ENCODE measurements at regions of chr9 and their contacts with region 1.

Region 1: DNA sequence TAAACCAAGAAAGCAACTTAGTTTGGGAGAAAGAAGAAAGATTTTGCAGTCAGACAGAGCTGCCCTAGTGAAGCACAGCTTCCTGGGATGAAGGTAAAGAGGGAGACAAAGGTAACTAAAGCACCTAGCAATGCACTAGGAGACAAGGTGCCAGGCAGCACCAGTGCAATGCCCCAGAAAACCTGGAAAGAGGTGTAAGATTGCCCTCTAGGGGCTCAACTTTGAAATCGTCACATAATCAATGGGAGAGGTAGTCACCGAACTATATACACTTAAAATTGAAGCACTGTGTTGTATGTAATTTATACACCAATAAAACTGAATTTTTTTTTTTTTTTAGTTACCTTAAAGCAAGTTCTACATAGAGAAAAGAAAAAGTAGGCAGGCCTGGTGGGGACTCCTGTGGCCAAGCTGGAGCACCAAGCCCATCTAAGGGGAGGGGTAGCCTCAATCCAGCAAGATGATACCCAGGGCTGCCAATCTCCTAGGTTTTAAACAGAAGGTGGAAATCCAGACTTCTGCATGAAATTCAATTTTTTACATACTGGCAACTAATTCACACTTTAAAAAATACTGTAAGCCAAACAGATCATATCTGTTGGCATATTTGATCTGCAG is 48.2 kb downstream of the CDK5RAP2 start:
- DNase-seq: peak; percentile 30
- H3K4me3 ChIP-seq: no peak overlapping the region
- H3K27ac ChIP-seq: no peak overlapping the region
- H3K4me1 ChIP-seq: no peaks in the 10 kb centered on the region
- H3K27me3 ChIP-seq: no peaks in the 10 kb centered on the region
- CTCF ChIP-seq: peak; percentile 25 to 40
- POLR2A ChIP-seq: no peak

Region 2: GRCh38 chr9:119961774-119962424 is 569.9 kb before region 1 on chr9:
- CTCF ChIA-PET with region 1: no interaction called
- POLR2A ChIA-PET with region 1: no interaction called
- dilution Hi-C with region 1: no loop called
- intact Hi-C with region 1: loop called (anchors 5 kb)
- DNase-seq: peak; percentile 7
- H3K4me3 ChIP-seq: no peak overlapping the region
- H3K27ac ChIP-seq: no peak overlapping the region
- H3K4me1 ChIP-seq: no peaks in the 10 kb centered on the region
- H3K27me3 ChIP-seq: no peaks in the 10 kb centered on the region
- CTCF ChIP-seq: peak; percentile 63 to 73
- POLR2A ChIP-seq: no peak

Region 3: DNA sequence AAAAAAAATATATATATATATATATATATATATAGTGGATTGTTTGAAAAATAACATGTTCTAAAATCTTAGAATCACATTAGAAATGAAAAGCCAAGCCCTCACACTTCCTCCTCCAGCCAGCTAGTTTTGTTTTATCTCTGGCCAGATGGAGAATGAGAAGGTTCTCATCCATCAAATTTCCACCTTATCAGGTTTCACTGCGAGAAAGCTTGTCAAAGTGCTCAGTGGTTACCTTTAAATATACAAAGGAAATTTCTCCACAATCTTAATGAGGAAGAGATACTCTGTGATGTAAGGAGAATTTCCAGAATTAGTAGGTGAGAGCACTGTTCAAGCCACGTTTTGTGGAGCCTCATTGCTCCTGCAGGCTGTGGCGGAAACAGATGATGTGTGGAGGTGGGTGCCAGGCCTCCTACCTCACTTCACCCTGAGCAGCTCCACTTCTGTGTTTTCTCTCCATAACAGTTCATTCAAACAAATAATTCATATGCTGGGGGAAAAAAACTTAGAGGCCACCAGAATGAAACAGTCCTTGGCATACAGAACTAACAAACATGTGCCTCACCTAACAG is 23.8 kb before region 1 on chr9:
- CTCF ChIA-PET with region 1: no interaction called
- POLR2A ChIA-PET with region 1: no interaction called
- dilution Hi-C with region 1: no loop called
- intact Hi-C with region 1: no loop called
- DNase-seq: no peak
- H3K4me3 ChIP-seq: no peak overlapping the region
- H3K27ac ChIP-seq: no peak overlapping the region
- H3K4me1 ChIP-seq: no peaks in the 10 kb centered on the region
- H3K27me3 ChIP-seq: no peaks in the 10 kb centered on the region
- CTCF ChIP-seq: no peak
- POLR2A ChIP-seq: no peak

Region 4: GRCh38 chr9:120542701-120543490 is 11.1 kb after region 1 on chr9:
- CTCF ChIA-PET with region 1: interaction called, 10 read pairs
- POLR2A ChIA-PET with region 1: no interaction called
- dilution Hi-C with region 1: no loop called
- intact Hi-C with region 1: no loop called
- DNase-seq: peak; percentile 6
- H3K4me3 ChIP-seq: no peak overlapping the region
- H3K27ac ChIP-seq: no peak overlapping the region
- H3K4me1 ChIP-seq: peaks cover 19% of the 10 kb centered on the region
- H3K27me3 ChIP-seq: no peaks in the 10 kb centered on the region
- CTCF ChIP-seq: no peak
- POLR2A ChIP-seq: no peak

Region 5: GRCh38 chr9:120592210-120592609 is 60.4 kb after region 1 on chr9:
- CTCF ChIA-PET with region 1: no interaction called
- POLR2A ChIA-PET with region 1: no interaction called
- dilution Hi-C with region 1: no loop called
- intact Hi-C with region 1: no loop called
- DNase-seq: no peak
- H3K4me3 ChIP-seq: no peak overlapping the region
- H3K27ac ChIP-seq: no peak overlapping the region
- H3K4me1 ChIP-seq: no peaks in the 10 kb centered on the region
- H3K27me3 ChIP-seq: peaks cover 0 to 3% of the 10 kb centered on the region in 2 experiments
- CTCF ChIP-seq: no peak
- POLR2A ChIP-seq: no peak

Region 6: GRCh38 chr9:120642129-120642770 is 110.5 kb after region 1 on chr9:
- CTCF ChIA-PET with region 1: no interaction called
- POLR2A ChIA-PET with region 1: no interaction called
- dilution Hi-C with region 1: no loop called
- intact Hi-C with region 1: no loop called
- DNase-seq: no peak
- H3K4me3 ChIP-seq: no peak overlapping the region
- H3K27ac ChIP-seq: no peak overlapping the region
- H3K4me1 ChIP-seq: no peaks in the 10 kb centered on the region
- H3K27me3 ChIP-seq: no peaks in the 10 kb centered on the region
- CTCF ChIP-seq: no peak
- POLR2A ChIP-seq: no peak